CD8-positive, alpha-beta T cell (primary cell): ENCODE measurements at regions of chr11 and their contacts with region 1.

Region 1: GRCh38 chr11:114262681-114263512 is 33.3 kb upstream of the NNMT start:
- DNase-seq: peak in 3 of 9 experiments; percentile 30 to 55 (median 42)
- ATAC-seq: peak; percentile 65
- H3K4me3 ChIP-seq: no peak overlapping the region
- H3K4me3 Mint-ChIP-seq: no peak overlapping the region
- H3K27ac ChIP-seq: no peak overlapping the region
- H3K27ac Mint-ChIP-seq: no peak overlapping the region
- H3K4me1 ChIP-seq: no peaks in the 10 kb centered on the region
- H3K4me1 Mint-ChIP-seq: peaks cover 4% of the 10 kb centered on the region
- H3K27me3 ChIP-seq: no peaks in the 10 kb centered on the region
- H3K27me3 Mint-ChIP-seq: no peaks in the 10 kb centered on the region
- CTCF ChIP-seq: peak; percentile 42

Region 2: DNA sequence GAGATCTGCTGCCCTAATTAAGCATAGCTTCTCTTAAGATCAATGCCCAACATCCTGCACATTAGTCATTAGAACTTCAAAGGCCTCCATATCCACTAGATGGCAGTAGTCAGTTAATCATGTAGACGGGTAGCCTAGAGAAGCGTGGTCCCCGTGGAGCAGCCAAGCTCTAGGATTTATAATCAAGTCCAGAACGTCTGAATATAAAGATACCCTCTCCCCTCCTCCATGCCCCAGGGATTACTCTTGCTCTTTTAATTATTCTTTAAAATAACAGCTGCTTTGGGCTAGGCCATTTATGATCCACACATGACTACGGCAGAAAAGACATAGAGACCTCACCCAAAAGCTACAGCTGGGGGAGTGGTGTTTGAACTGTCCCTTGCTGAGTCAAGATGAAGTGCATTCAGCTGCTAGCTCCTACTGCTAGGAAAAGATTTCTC is 1674.6 kb before region 1 on chr11:
- CTCF ChIA-PET with region 1: interaction called, 3 read pairs
- POLR2A ChIA-PET with region 1: no interaction called
- intact Hi-C with region 1: loop called in 1 of 2 experiments (anchors 10 kb)
- DNase-seq: peak in 7 of 9 experiments; percentile 7 to 67 (median 27)
- ATAC-seq: peak; percentile 36
- H3K4me3 ChIP-seq: no peak overlapping the region
- H3K4me3 Mint-ChIP-seq: no peak overlapping the region
- H3K27ac ChIP-seq: no peak overlapping the region
- H3K27ac Mint-ChIP-seq: no peak overlapping the region
- H3K4me1 ChIP-seq: no peaks in the 10 kb centered on the region
- H3K4me1 Mint-ChIP-seq: peaks cover 2% of the 10 kb centered on the region
- H3K27me3 ChIP-seq: no peaks in the 10 kb centered on the region
- H3K27me3 Mint-ChIP-seq: peaks cover 13% of the 10 kb centered on the region
- CTCF ChIP-seq: peak; percentile 58

Region 3: GRCh38 chr11:113985906-113986305 is 277.0 kb before region 1 on chr11:
- CTCF ChIA-PET with region 1: interaction called, 357 read pairs
- POLR2A ChIA-PET with region 1: no interaction called
- intact Hi-C with region 1: no loop called
- DNase-seq: no peak
- ATAC-seq: no peak
- H3K4me3 ChIP-seq: no peak overlapping the region
- H3K4me3 Mint-ChIP-seq: no peak overlapping the region
- H3K27ac ChIP-seq: no peak overlapping the region
- H3K27ac Mint-ChIP-seq: no peak overlapping the region
- H3K4me1 ChIP-seq: no peaks in the 10 kb centered on the region
- H3K4me1 Mint-ChIP-seq: no peaks in the 10 kb centered on the region
- H3K27me3 ChIP-seq: peaks cover 0 to 2% of the 10 kb centered on the region in 2 experiments
- H3K27me3 Mint-ChIP-seq: peaks cover 23% of the 10 kb centered on the region
- CTCF ChIP-seq: no peak

Region 4: DNA sequence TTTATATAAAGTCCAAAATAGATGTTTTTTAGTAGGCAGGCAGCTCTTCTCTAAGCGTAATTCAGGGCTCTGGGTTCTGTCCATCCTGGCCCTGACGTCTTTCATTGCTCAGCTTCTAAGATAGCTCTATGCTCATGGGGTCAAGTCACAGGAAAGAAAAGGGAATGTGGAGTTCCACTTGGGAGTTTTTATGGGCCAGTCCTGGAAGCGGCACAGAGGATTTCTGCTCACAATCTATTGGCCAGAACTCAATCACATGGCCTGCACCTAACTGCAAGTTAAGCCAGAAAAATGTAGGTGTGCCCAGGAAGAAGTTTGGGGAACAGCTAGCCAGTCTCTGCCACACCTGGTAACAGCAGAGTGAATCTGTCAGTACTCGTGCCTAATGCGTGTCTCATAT is 210.7 kb before region 1 on chr11:
- CTCF ChIA-PET with region 1: interaction called, 60 read pairs
- POLR2A ChIA-PET with region 1: no interaction called
- intact Hi-C with region 1: no loop called
- DNase-seq: no peak
- ATAC-seq: no peak
- H3K4me3 ChIP-seq: no peak overlapping the region
- H3K4me3 Mint-ChIP-seq: no peak overlapping the region
- H3K27ac ChIP-seq: no peak overlapping the region
- H3K27ac Mint-ChIP-seq: no peak overlapping the region
- H3K4me1 ChIP-seq: no peaks in the 10 kb centered on the region
- H3K4me1 Mint-ChIP-seq: no peaks in the 10 kb centered on the region
- H3K27me3 ChIP-seq: no peaks in the 10 kb centered on the region
- H3K27me3 Mint-ChIP-seq: peaks cover 7% of the 10 kb centered on the region
- CTCF ChIP-seq: no peak

Region 5: DNA sequence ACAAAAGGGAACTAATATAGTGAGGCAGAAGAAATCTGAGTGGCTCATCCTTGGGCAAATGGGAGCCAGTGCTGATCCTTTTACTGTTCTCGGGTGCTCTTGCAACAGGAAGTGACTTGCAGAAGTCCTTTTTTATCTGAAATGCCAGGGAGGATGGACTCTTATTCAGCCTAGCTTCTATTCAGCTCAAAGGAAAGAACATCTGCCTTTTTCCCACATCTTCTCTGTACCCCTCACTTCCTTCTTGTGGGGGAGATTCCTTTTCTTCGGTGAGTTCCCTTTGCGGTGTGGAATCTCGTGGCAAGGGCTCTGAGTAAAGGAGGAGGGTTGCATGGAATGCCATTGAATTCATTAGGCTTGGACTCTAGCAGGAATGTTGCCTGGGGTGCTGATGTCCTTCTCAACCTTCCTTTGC is 127.2 kb before region 1 on chr11:
- CTCF ChIA-PET with region 1: interaction called, 12 read pairs
- POLR2A ChIA-PET with region 1: no interaction called
- intact Hi-C with region 1: no loop called
- DNase-seq: peak in 1 of 9 experiments; percentile 20
- ATAC-seq: no peak
- H3K4me3 ChIP-seq: no peak overlapping the region
- H3K4me3 Mint-ChIP-seq: no peak overlapping the region
- H3K27ac ChIP-seq: no peak overlapping the region
- H3K27ac Mint-ChIP-seq: no peak overlapping the region
- H3K4me1 ChIP-seq: no peaks in the 10 kb centered on the region
- H3K4me1 Mint-ChIP-seq: peaks cover 53% of the 10 kb centered on the region
- H3K27me3 ChIP-seq: no peaks in the 10 kb centered on the region
- H3K27me3 Mint-ChIP-seq: no peaks in the 10 kb centered on the region
- CTCF ChIP-seq: no peak

Region 6: GRCh38 chr11:114180301-114181055 is 82.4 kb before region 1 on chr11:
- CTCF ChIA-PET with region 1: interaction called, 70 read pairs
- POLR2A ChIA-PET with region 1: interaction called, 3 read pairs
- intact Hi-C with region 1: no loop called
- DNase-seq: peak in 4 of 9 experiments; percentile 39 to 59 (median 50)
- ATAC-seq: no peak
- H3K4me3 ChIP-seq: no peak overlapping the region
- H3K4me3 Mint-ChIP-seq: peak overlapping the region; percentile 12
- H3K27ac ChIP-seq: no peak overlapping the region
- H3K27ac Mint-ChIP-seq: peak overlapping the region; percentile 46
- H3K4me1 ChIP-seq: peaks cover 64% of the 10 kb centered on the region
- H3K4me1 Mint-ChIP-seq: peaks cover 77% of the 10 kb centered on the region
- H3K27me3 ChIP-seq: no peaks in the 10 kb centered on the region
- H3K27me3 Mint-ChIP-seq: no peaks in the 10 kb centered on the region
- CTCF ChIP-seq: peak; percentile 36

Region 7: DNA sequence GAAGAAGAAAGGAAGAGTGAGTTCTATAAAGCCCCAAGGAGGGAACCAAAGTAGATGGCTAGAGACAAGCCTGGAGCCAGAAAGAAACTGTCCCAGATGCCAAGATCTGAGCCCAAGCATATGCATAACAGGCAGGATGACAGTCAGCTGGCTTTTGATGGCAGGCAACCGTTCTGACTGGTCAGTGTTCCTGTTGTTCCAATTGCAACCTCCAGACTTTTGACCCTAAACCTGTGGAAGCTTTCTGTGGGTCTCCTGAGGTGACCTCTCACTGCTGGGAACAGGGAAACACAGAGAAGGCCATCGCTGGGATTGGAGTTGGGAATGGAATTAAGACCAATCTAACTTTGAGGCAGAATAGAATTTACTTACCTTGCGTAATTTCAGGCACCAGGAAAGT is 11.7 kb after region 1 on chr11:
- CTCF ChIA-PET with region 1: interaction called, 15 read pairs
- POLR2A ChIA-PET with region 1: no interaction called
- intact Hi-C with region 1: no loop called
- DNase-seq: no peak
- ATAC-seq: no peak
- H3K4me3 ChIP-seq: no peak overlapping the region
- H3K4me3 Mint-ChIP-seq: no peak overlapping the region
- H3K27ac ChIP-seq: no peak overlapping the region
- H3K27ac Mint-ChIP-seq: no peak overlapping the region
- H3K4me1 ChIP-seq: no peaks in the 10 kb centered on the region
- H3K4me1 Mint-ChIP-seq: no peaks in the 10 kb centered on the region
- H3K27me3 ChIP-seq: peaks cover 0 to 2% of the 10 kb centered on the region in 2 experiments
- H3K27me3 Mint-ChIP-seq: peaks cover 48% of the 10 kb centered on the region
- CTCF ChIP-seq: no peak